Heart right ventricle (tissue), 16 donors: ENCODE measurements at regions of chr1 and their contacts with region 1.

Region 1: GRCh38 chr1:110756506-110756905 is 81.8 kb upstream of the KCNA3 start:
- DNase-seq: peak; percentile 39 to 55
- ATAC-seq: peak; percentile 59 to 98 (median 81)
- H3K4me3 ChIP-seq: no peak overlapping the region
- H3K27ac ChIP-seq: no peak overlapping the region
- H3K4me1 ChIP-seq: no peaks in the 10 kb centered on the region
- H3K27me3 ChIP-seq: peaks cover 0 to 32% (median 9%) of the 10 kb centered on the region in 7 donors
- CTCF ChIP-seq: no peak

Region 2: GRCh38 chr1:110272045-110272444 is 484.5 kb before region 1 on chr1:
- intact Hi-C with region 1: no loop called
- DNase-seq: no peak
- ATAC-seq: no peak
- H3K4me3 ChIP-seq: no peak overlapping the region
- H3K27ac ChIP-seq: no peak overlapping the region
- H3K4me1 ChIP-seq: peaks cover 0 to 7% (median 0%) of the 10 kb centered on the region in 9 donors
- H3K27me3 ChIP-seq: no peaks in the 10 kb centered on the region
- CTCF ChIP-seq: no peak

Region 3: GRCh38 chr1:110718452-110718851 is 38.1 kb before region 1 on chr1:
- intact Hi-C with region 1: loop called in 1 of 10 experiments (anchors 5 kb)
- DNase-seq: peak; percentile 38 to 67
- ATAC-seq: peak; percentile 78 to 98 (median 92)
- H3K4me3 ChIP-seq: no peak overlapping the region
- H3K27ac ChIP-seq: peak overlapping the region in 1 of 10 donors; percentile 31
- H3K4me1 ChIP-seq: peaks cover 0 to 14% (median 0%) of the 10 kb centered on the region in 9 donors
- H3K27me3 ChIP-seq: peaks cover 0 to 3% (median 0%) of the 10 kb centered on the region in 7 donors
- CTCF ChIP-seq: no peak

Region 4: DNA sequence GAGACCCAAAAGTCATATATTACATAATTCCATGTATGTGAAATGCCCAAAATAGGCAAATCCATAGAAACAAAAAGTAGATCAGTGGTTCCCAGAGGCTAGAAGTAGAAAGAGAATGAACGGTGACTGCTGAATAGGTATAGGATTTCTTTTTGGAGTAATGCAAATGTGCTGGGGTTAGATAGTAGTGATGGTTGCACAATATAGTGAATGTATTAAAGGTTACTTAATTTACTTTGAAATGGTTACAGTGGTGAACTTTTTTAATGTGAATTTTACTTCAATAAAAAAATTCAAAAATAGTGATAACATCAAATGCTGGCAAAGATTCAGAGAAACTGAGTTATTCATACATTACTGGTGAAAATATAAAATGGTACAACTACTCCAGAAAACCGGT is 84.2 kb after region 1 on chr1:
- intact Hi-C with region 1: no loop called
- DNase-seq: no peak
- ATAC-seq: no peak
- H3K4me3 ChIP-seq: no peak overlapping the region
- H3K27ac ChIP-seq: no peak overlapping the region
- H3K4me1 ChIP-seq: no peaks in the 10 kb centered on the region
- H3K27me3 ChIP-seq: peaks cover 0 to 8% (median 0%) of the 10 kb centered on the region in 7 donors
- CTCF ChIP-seq: no peak

Region 5: GRCh38 chr1:110879758-110880606 is 123.5 kb after region 1 on chr1:
- intact Hi-C with region 1: no loop called
- DNase-seq: no peak
- ATAC-seq: peak in 3 of 8 donors; percentile 4 to 62 (median 37)
- H3K4me3 ChIP-seq: peak overlapping the region in 1 of 10 donors; percentile 1
- H3K27ac ChIP-seq: peak overlapping the region in 1 of 10 donors; percentile 95
- H3K4me1 ChIP-seq: peaks cover 0 to 87% (median 0%) of the 10 kb centered on the region in 9 donors
- H3K27me3 ChIP-seq: peaks cover 0 to 6% (median 0%) of the 10 kb centered on the region in 7 donors
- CTCF ChIP-seq: no peak